ENCODE measurements at regions of chr1 and their contacts with region 1.

Region 1: DNA sequence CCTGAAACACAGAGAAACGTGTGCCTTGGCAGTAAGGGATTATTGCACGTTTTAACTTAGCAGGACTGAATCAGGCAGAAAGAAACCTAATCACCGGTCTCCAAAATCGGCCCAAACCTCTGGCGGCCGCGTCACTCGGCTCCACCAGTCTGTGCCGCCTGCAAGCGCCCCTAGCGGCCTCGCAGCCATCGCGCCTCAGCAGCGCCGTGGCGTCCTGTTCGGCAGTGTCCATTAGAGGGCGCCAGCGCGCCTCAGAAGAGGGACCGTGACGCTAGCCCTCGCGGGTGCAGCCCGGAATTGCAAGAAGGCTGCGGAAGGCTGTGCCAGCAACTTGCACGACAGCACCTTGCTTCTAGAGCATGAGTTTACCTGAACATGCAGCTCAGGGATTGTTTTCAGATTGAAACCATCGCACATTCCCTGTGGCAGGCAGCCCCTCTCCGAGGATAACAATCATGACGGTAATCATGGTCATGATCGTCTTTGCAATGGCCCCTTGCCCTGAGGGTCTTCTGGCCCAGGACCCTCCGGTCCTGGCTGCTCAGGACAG is 164.4 kb downstream of the TRIM33 start:
- DNase-seq: peak; percentile 94 to 99 (median 97)
- ATAC-seq: peak; percentile 98
- H3K4me3 ChIP-seq: peak overlapping the region; percentile 43 to 47
- H3K4me3 Mint-ChIP-seq: peak overlapping the region; percentile 92
- H3K27ac ChIP-seq: peak overlapping the region in 1 of 2 experiments; percentile 41
- H3K27ac Mint-ChIP-seq: peak overlapping the region; percentile 94
- H3K4me1 ChIP-seq: peaks cover 30% of the 10 kb centered on the region
- H3K4me1 Mint-ChIP-seq: peaks cover 33% of the 10 kb centered on the region
- H3K27me3 ChIP-seq: no peaks in the 10 kb centered on the region
- H3K27me3 Mint-ChIP-seq: no peaks in the 10 kb centered on the region
- CTCF ChIP-seq: peak; percentile 100

Region 2: GRCh38 chr1:113978863-113979702 is 367.5 kb before region 1 on chr1 and contains the start of gene OLFML3:
- CTCF ChIA-PET with region 1: interaction called, 8 read pairs
- POLR2A ChIA-PET with region 1: no interaction called
- intact Hi-C with region 1: loop called (anchors 5 to 10 kb)
- DNase-seq: peak in 6 of 9 experiments; percentile 8 to 70 (median 48)
- ATAC-seq: peak; percentile 26
- H3K4me3 ChIP-seq: no peak within 1 kb of the TSS
- H3K4me3 Mint-ChIP-seq: no peak within 1 kb of the TSS
- H3K27ac ChIP-seq: no peak within 1 kb of the TSS
- H3K27ac Mint-ChIP-seq: peak within 1 kb of the TSS; percentile 55
- H3K4me1 ChIP-seq: peaks cover 18% of the 10 kb centered on the region
- H3K4me1 Mint-ChIP-seq: peaks cover 41% of the 10 kb centered on the region
- H3K27me3 ChIP-seq: no peaks in the 10 kb centered on the region
- H3K27me3 Mint-ChIP-seq: no peaks in the 10 kb centered on the region
- CTCF ChIP-seq: peak; percentile 56
- total RNA-seq, gene OLFML3: 0.49 to 0.67 TPM

Region 3: DNA sequence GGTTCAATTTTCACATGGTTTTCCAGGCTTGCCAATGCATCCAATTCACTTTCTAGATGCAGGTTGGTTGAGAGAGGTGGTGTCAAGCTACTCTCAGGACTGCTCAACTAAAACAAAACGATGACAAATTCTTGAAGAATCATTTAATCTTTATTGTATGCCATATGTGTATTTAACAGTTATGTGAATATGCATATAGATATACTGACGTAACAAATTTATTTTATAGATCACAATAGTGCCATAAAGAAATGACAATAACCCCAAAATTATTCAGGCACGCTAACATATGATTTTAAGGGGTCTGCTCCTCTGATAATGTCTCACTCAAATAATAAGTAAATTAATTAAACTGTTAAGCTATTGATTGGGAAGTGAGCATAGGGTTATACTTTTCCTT is 59.1 kb after region 1 on chr1:
- CTCF ChIA-PET with region 1: interaction called, 7 read pairs
- POLR2A ChIA-PET with region 1: no interaction called
- intact Hi-C with region 1: loop called in 1 of 2 experiments (anchors 5 kb)
- DNase-seq: no peak
- ATAC-seq: no peak
- H3K4me3 ChIP-seq: no peak overlapping the region
- H3K4me3 Mint-ChIP-seq: no peak overlapping the region
- H3K27ac ChIP-seq: no peak overlapping the region
- H3K27ac Mint-ChIP-seq: no peak overlapping the region
- H3K4me1 ChIP-seq: no peaks in the 10 kb centered on the region
- H3K4me1 Mint-ChIP-seq: no peaks in the 10 kb centered on the region
- H3K27me3 ChIP-seq: no peaks in the 10 kb centered on the region
- H3K27me3 Mint-ChIP-seq: no peaks in the 10 kb centered on the region
- CTCF ChIP-seq: no peak

Region 4: GRCh38 chr1:114558544-114558943 is 212.0 kb after region 1 on chr1:
- CTCF ChIA-PET with region 1: interaction called, 11 read pairs
- POLR2A ChIA-PET with region 1: no interaction called
- intact Hi-C with region 1: loop called (anchors 1 kb)
- DNase-seq: peak in 2 of 9 experiments; percentile 26 to 48
- ATAC-seq: no peak
- H3K4me3 ChIP-seq: no peak overlapping the region
- H3K4me3 Mint-ChIP-seq: no peak overlapping the region
- H3K27ac ChIP-seq: no peak overlapping the region
- H3K27ac Mint-ChIP-seq: no peak overlapping the region
- H3K4me1 ChIP-seq: no peaks in the 10 kb centered on the region
- H3K4me1 Mint-ChIP-seq: no peaks in the 10 kb centered on the region
- H3K27me3 ChIP-seq: no peaks in the 10 kb centered on the region
- H3K27me3 Mint-ChIP-seq: no peaks in the 10 kb centered on the region
- CTCF ChIP-seq: peak; percentile 48

Region 5: GRCh38 chr1:114716304-114717170 is 370.0 kb after region 1 on chr1 and contains the start of gene NRAS:
- CTCF ChIA-PET with region 1: no interaction called
- POLR2A ChIA-PET with region 1: interaction called, 3 read pairs
- intact Hi-C with region 1: loop called (anchors 2 to 5 kb)
- DNase-seq: peak; percentile 91 to 97 (median 97)
- ATAC-seq: peak; percentile 94
- H3K4me3 ChIP-seq: peak within 1 kb of the TSS; percentile 84 to 87
- H3K4me3 Mint-ChIP-seq: peak within 1 kb of the TSS; percentile 97
- H3K27ac ChIP-seq: peak within 1 kb of the TSS; percentile 94 to 99
- H3K27ac Mint-ChIP-seq: peak within 1 kb of the TSS; percentile 100
- H3K4me1 ChIP-seq: peaks cover 16% of the 10 kb centered on the region
- H3K4me1 Mint-ChIP-seq: peaks cover 34% of the 10 kb centered on the region
- H3K27me3 ChIP-seq: no peaks in the 10 kb centered on the region
- H3K27me3 Mint-ChIP-seq: no peaks in the 10 kb centered on the region
- CTCF ChIP-seq: no peak
- total RNA-seq, gene NRAS: 46.0 to 46.4 TPM

Region 6: GRCh38 chr1:114794038-114794437 is 447.5 kb after region 1 on chr1:
- CTCF ChIA-PET with region 1: no interaction called
- POLR2A ChIA-PET with region 1: no interaction called
- intact Hi-C with region 1: no loop called
- DNase-seq: no peak
- ATAC-seq: no peak
- H3K4me3 ChIP-seq: no peak overlapping the region
- H3K4me3 Mint-ChIP-seq: no peak overlapping the region
- H3K27ac ChIP-seq: no peak overlapping the region
- H3K27ac Mint-ChIP-seq: no peak overlapping the region
- H3K4me1 ChIP-seq: no peaks in the 10 kb centered on the region
- H3K4me1 Mint-ChIP-seq: no peaks in the 10 kb centered on the region
- H3K27me3 ChIP-seq: peaks cover 0 to 3% of the 10 kb centered on the region in 2 experiments
- H3K27me3 Mint-ChIP-seq: peaks cover 21% of the 10 kb centered on the region
- CTCF ChIP-seq: no peak

Region 7: GRCh38 chr1:114979278-114979891 is 632.8 kb after region 1 on chr1:
- CTCF ChIA-PET with region 1: no interaction called
- POLR2A ChIA-PET with region 1: no interaction called
- intact Hi-C with region 1: loop called in 1 of 2 experiments (anchors 1 kb)
- DNase-seq: peak; percentile 42 to 79 (median 76)
- ATAC-seq: no peak
- H3K4me3 ChIP-seq: no peak overlapping the region
- H3K4me3 Mint-ChIP-seq: no peak overlapping the region
- H3K27ac ChIP-seq: no peak overlapping the region
- H3K27ac Mint-ChIP-seq: no peak overlapping the region
- H3K4me1 ChIP-seq: no peaks in the 10 kb centered on the region
- H3K4me1 Mint-ChIP-seq: no peaks in the 10 kb centered on the region
- H3K27me3 ChIP-seq: peaks cover 0 to 2% of the 10 kb centered on the region in 2 experiments
- H3K27me3 Mint-ChIP-seq: peaks cover 20% of the 10 kb centered on the region
- CTCF ChIP-seq: peak; percentile 97

Region 8: GRCh38 chr1:115112496-115113375 is 766.2 kb after region 1 on chr1:
- CTCF ChIA-PET with region 1: no interaction called
- POLR2A ChIA-PET with region 1: no interaction called
- intact Hi-C with region 1: loop called in 1 of 2 experiments (anchors 2 kb)
- DNase-seq: peak; percentile 26 to 79 (median 60)
- ATAC-seq: peak; percentile 64
- H3K4me3 ChIP-seq: no peak overlapping the region
- H3K4me3 Mint-ChIP-seq: no peak overlapping the region
- H3K27ac ChIP-seq: no peak overlapping the region
- H3K27ac Mint-ChIP-seq: no peak overlapping the region
- H3K4me1 ChIP-seq: no peaks in the 10 kb centered on the region
- H3K4me1 Mint-ChIP-seq: peaks cover 15% of the 10 kb centered on the region
- H3K27me3 ChIP-seq: no peaks in the 10 kb centered on the region
- H3K27me3 Mint-ChIP-seq: peaks cover 4% of the 10 kb centered on the region
- CTCF ChIP-seq: peak; percentile 99